ENCODE measurements at regions of chr14 and their contacts with region 1.

Region 1: DNA sequence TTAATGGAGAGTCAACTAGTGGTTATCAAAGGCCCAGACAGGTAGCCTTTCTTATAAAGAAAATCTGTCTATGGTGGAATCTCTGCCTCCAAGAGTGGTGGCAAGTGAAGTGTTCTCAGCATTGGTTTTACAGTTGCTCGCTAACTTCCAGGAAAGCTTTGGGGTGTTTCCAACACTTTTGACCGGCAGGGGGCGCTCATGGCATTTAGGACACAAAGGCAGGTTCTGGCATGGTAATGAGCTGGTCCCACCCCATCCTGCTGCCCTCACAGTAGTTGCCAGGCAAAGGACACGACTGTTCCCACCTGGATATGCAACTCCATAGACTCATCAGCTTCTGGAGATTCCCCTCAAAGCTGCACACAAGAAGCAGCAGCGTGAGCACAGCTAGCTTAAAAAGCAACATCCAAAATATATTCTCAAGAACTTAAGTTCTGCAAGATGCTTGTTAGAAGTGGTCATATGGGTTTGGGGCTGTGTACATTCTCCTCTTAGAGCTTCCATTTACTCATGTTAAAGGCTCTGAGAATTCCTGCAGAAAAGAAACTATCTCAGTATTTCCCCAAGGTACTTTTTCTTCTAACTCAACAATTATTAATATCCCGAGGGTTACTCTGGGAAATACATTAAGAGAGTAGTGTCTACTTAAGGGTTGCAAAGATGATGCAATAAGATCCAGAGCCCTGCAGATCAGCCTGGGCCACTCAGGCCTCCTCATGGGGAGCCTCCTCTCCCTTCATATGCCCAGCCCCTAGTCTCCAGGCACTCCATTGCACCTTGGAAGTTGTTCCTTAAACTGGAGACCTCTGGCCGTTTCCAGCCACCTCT is 14.8 kb downstream of the PROX2 start:
- DNase-seq: peak; percentile 95
- ATAC-seq: peak; percentile 89

Region 2: DNA sequence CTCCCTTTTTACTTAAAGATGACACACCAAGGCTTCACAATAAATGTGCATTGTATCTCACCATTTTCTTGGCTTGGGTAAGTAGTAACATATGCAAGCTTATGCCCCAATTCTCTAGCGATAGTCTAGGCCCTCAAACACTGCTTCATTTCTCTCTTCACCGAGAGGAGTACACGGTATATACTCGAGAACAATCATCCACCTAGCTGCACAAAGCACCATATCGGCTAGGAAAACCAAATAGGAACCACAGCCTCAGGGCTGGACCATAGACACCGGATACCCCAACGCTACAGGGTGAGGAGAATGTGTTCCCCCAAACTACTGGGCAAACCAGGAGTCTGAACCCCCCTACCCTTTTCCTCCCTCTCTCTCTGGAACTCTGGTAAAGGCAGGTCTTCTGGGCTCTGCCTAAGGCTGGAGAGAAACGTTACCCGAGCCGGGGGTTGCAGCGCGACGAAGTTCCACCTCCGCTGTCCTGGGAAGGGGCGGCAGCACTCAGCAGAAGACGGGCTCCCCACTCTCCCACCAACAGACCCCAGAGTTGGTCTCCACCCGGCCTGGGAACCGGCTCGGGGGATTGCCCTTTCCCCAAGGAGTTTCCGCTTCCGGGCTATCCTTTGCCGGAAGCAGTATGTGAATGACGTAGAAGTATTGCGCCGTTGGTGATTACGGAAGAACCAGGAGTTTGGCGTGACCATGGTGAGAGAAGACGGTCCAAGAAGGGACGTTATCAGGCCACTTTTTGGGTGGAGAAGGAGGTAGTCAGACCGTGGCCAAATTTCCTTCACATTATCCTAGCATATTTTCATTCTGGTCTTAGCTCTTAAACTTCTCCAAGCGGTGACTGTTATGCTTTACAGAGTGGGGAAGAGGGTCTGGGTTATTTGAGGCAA is 148.4 kb before region 1 on chr14 and contains the starts of genes AREL1 and FCF1:
- intact Hi-C with region 1: no loop called
- DNase-seq: peak; percentile 80
- ATAC-seq: peak; percentile 99
- total RNA-seq, gene AREL1: 22.6 TPM
- total RNA-seq, gene FCF1: 35.8 TPM

Region 3: DNA sequence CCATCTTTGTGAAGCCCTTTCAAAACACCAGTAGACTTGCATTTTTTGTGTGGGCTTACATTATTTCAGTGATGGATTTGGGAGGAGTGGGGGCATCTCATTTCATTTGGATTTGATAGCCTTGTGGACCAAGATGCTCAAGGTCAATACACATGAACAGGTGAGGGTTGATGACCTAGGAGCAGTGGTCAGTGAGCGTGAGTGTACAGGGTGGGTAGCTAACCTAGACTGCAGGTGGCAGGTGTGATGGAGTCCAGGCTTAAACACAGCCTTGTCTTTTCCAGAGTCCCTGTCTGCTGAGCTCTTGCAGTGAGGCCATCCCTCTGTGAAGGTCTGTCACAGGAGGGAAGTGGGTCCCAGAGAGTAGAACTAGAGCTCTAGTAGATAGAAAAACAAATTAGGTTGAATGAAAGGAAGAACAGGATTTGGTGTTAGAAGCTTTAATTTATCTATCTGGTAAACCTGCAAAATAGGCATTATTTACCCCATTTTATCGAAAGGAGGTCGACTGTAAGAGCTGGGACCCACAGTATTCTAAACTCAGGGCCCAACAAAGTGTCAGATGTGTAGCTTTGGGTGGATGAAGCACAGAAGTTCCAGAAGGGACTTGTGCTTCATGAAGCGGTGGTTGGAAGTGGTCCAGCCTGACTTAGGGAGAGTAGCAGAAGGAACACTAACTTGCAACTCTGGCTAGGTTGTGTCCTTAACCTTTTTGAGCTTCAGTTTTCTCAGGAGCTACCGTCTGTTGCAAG is 43.7 kb after region 1 on chr14:
- intact Hi-C with region 1: loop called (anchors 5 kb)
- DNase-seq: no peak
- ATAC-seq: peak; percentile 9